Naive thymus-derived CD4-positive, alpha-beta T cell (primary cell): ENCODE measurements at regions of chr5 and their contacts with region 1.

Region 1: GRCh38 chr5:137735555-137736284 is at the start of gene KLHL3:
- DNase-seq: peak in 8 of 9 donors; percentile 32 to 57 (median 44)
- ATAC-seq: peak; percentile 49
- H3K4me3 ChIP-seq: peak within 1 kb of the TSS; percentile 86
- H3K4me3 Mint-ChIP-seq: no peak within 1 kb of the TSS
- H3K27ac ChIP-seq: peak within 1 kb of the TSS; percentile 63
- H3K27ac Mint-ChIP-seq: no peak within 1 kb of the TSS
- H3K4me1 ChIP-seq: peaks cover 9 to 58% of the 10 kb centered on the region in 2 donors
- H3K4me1 Mint-ChIP-seq: peaks cover 0 to 42% (median 15%) of the 10 kb centered on the region in 7 donors
- H3K27me3 ChIP-seq: no peaks in the 10 kb centered on the region
- H3K27me3 Mint-ChIP-seq: no peaks in the 10 kb centered on the region
- total RNA-seq, gene KLHL3: 10.4 to 47.3 (median 26.6) TPM

Region 2: DNA sequence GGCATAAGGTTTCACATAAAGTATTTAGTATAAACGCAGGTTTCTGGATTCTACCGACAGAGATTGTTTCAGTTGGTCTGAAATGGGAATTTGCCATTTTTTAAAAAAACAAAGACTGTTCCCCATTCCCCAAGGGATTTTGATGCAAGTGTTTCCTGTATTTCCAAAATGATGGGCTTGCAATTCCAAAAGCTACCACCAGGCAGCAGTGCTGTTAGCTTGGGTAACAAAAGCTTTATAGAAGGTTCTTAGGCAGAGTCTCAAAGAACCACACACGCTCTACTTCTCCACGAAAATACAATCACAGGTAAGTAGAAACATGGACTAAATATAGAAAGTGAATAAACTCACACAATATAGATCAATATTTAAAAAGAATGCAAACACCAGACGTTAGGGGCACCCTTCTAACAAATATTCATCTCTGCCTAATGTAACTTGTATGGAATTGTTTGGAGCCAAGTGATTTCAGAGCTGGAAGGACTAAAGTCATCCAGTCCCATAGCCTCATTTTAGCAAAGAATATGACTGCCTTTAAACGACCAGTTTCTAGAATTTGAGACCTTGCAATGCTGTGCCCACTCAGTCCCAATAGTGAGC is 390.9 kb before region 1 on chr5:
- CTCF ChIA-PET with region 1: no interaction called
- POLR2A ChIA-PET with region 1: no interaction called
- intact Hi-C with region 1: no loop called
- DNase-seq: no peak
- ATAC-seq: no peak
- H3K4me3 ChIP-seq: no peak overlapping the region
- H3K4me3 Mint-ChIP-seq: no peak overlapping the region
- H3K27ac ChIP-seq: no peak overlapping the region
- H3K27ac Mint-ChIP-seq: no peak overlapping the region
- H3K4me1 ChIP-seq: no peaks in the 10 kb centered on the region
- H3K4me1 Mint-ChIP-seq: no peaks in the 10 kb centered on the region
- H3K27me3 ChIP-seq: no peaks in the 10 kb centered on the region
- H3K27me3 Mint-ChIP-seq: peaks cover 0 to 10% (median 8%) of the 10 kb centered on the region in 5 donors

Region 3: GRCh38 chr5:137580030-137580429 is 155.7 kb before region 1 on chr5:
- CTCF ChIA-PET with region 1: no interaction called
- POLR2A ChIA-PET with region 1: no interaction called
- intact Hi-C with region 1: no loop called
- DNase-seq: no peak
- ATAC-seq: no peak
- H3K4me3 ChIP-seq: no peak overlapping the region
- H3K4me3 Mint-ChIP-seq: no peak overlapping the region
- H3K27ac ChIP-seq: no peak overlapping the region
- H3K27ac Mint-ChIP-seq: no peak overlapping the region
- H3K4me1 ChIP-seq: no peaks in the 10 kb centered on the region
- H3K4me1 Mint-ChIP-seq: peaks cover 0 to 5% (median 0%) of the 10 kb centered on the region in 7 donors
- H3K27me3 ChIP-seq: no peaks in the 10 kb centered on the region
- H3K27me3 Mint-ChIP-seq: peaks cover 5 to 22% (median 12%) of the 10 kb centered on the region in 5 donors

Region 4: DNA sequence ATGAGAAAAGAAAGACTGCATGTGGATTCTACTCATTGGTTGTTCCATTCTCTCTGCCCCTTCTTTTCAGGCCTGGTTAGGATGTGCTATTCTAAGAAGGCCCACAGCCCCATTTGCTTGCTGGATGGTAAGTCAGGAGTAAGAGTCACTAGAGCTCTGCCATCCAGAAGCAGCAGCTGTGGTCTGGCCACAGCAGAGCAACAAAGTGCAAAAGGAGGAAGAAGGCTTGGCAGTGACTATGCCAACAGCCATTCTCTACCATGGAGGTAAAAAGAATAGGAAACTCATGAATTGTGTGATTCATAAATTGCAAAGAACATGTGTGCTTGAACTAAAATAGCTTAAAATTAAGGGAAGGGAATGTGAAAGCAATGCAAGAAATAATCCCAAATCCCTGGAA is 20.8 kb before region 1 on chr5:
- CTCF ChIA-PET with region 1: no interaction called
- POLR2A ChIA-PET with region 1: interaction called, 8 read pairs
- intact Hi-C with region 1: loop called in 1 of 2 experiments (anchors 2 kb)
- DNase-seq: no peak
- ATAC-seq: no peak
- H3K4me3 ChIP-seq: no peak overlapping the region
- H3K4me3 Mint-ChIP-seq: no peak overlapping the region
- H3K27ac ChIP-seq: no peak overlapping the region
- H3K27ac Mint-ChIP-seq: no peak overlapping the region
- H3K4me1 ChIP-seq: no peaks in the 10 kb centered on the region
- H3K4me1 Mint-ChIP-seq: peaks cover 0 to 32% (median 8%) of the 10 kb centered on the region in 7 donors
- H3K27me3 ChIP-seq: no peaks in the 10 kb centered on the region
- H3K27me3 Mint-ChIP-seq: no peaks in the 10 kb centered on the region